Gastrocnemius medialis (tissue), 4 donors: ENCODE measurements at regions of chr4 and their contacts with region 1.

Region 1: DNA sequence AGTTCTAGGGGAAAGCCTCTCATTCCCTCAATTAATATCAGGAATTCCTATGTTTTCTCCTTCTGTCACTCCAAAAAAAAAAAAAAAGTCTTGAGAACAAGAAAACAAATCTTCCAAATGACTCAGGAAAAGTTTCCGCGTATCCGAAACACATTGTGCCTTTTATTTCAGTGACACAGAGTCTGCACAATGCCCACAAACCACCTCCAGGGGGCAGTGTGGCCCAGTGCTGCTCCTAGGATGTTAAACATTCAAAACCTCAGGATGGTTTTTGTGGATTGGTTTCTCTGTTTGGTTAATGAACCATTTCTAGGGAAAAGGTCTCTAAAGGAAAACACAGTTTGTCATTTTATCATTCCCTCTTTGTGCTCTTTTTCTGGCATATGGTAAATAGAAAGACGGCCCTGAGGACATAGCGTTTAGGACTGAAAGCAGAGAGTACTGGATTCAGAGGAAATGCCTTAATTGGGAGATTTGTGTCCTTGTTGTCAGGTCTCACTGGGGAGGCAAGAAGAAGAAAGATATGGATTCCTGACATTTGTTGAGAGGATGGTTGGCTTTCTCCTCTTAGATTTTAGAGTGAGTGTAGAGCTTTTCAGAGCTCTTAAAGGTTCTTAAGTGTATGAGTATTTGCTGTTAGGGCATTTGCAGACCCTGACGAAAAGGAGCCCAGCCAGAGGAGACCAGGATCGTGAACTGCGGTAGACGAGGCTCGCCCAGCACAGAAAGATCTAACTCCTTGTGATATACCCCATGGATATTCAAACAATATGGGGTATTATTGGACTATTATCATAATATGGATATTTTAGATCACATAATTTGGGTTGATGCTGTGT is 65.7 kb upstream of the MAP9 start:
- DNase-seq: peak; percentile 23 to 38
- ATAC-seq: peak in 1 of 2 donors; percentile 36
- H3K4me3 ChIP-seq: peak overlapping the region in 1 of 4 donors; percentile 16
- H3K27ac ChIP-seq: peak overlapping the region in 1 of 4 donors; percentile 32
- H3K4me1 ChIP-seq: no peaks in the 10 kb centered on the region
- H3K27me3 ChIP-seq: no peaks in the 10 kb centered on the region
- CTCF ChIP-seq: peak; percentile 49 to 82 (median 61)
- POLR2A ChIP-seq: no peak

Region 2: DNA sequence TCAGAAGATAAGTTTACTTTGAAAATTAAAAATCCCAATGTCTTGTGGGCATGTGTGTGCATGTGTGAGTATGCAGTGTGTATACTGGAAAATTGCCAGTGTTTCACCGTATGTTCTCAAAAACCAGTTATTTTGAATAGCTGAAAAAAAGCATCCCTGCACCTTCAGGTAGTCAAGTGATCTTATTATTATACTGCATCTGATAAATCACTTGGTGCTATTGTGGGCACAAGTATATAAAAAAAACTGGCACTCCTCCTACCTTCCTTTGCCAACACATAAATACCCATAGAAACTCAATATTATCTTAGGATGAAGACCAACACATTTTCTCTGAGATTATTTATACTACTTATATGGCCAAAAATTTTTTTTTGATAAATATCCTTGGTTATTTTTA is 25.8 kb after region 1 on chr4:
- in situ Hi-C with region 1: no loop called
- intact Hi-C with region 1: no loop called
- DNase-seq: no peak
- ATAC-seq: no peak
- H3K4me3 ChIP-seq: no peak overlapping the region
- H3K27ac ChIP-seq: no peak overlapping the region
- H3K4me1 ChIP-seq: no peaks in the 10 kb centered on the region
- H3K27me3 ChIP-seq: no peaks in the 10 kb centered on the region
- CTCF ChIP-seq: no peak
- POLR2A ChIP-seq: no peak

Region 3: DNA sequence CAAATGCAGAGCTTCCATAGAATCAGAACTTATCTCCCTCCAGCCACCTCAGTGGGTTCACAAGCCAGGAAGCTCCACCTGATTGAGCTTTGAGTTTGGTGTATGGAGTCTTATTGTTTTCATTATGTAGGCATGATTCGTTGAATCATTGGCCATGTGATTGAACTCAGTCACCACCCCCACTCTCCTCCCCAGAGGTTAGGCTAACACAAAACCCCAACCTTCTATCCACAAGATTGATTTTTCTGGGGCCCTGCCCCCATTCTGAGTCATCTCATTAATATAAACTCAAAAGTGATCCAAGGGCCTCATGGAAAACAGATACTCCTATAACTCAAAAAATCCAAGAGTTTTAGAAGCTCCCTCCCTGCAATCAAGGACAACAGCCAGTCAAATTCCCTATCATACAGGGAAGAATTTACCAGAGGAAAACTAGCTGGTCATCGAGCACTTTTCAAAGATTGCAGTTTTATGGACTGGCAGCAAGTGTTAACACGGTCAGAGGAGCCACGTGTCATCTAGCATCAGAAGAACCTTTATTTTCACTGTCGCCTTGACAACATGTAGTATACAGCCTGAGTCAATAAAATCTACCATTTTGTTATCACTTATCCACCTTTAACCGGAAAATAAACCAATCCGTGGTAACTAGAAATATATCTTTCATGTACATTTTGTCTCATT is 280.5 kb after region 1 on chr4:
- in situ Hi-C with region 1: no loop called
- intact Hi-C with region 1: no loop called
- DNase-seq: no peak
- ATAC-seq: no peak
- H3K4me3 ChIP-seq: no peak overlapping the region
- H3K27ac ChIP-seq: no peak overlapping the region
- H3K4me1 ChIP-seq: no peaks in the 10 kb centered on the region
- H3K27me3 ChIP-seq: no peaks in the 10 kb centered on the region
- CTCF ChIP-seq: no peak
- POLR2A ChIP-seq: no peak

Region 4: DNA sequence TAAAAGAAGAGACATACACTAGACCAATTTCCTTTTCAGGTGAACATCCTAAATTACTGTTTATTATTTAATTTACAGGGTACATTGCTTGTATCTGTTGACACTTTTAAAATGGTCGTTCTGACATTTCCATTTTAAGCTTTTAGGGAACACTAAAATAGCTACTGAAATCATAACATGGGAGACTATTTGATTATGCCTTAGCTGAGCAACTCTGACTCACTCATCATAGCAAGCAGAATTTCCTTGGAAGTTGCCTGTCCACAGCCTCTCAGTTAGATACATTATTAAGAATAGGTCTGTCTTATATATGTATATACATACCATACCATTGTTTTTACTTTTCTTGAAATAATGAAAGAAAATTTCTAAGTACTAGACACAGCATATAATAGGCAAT is 338.3 kb after region 1 on chr4:
- in situ Hi-C with region 1: loop called in 2 of 4 experiments (anchors 5 to 10 kb)
- intact Hi-C with region 1: no loop called
- DNase-seq: no peak
- ATAC-seq: no peak
- H3K4me3 ChIP-seq: no peak overlapping the region
- H3K27ac ChIP-seq: no peak overlapping the region
- H3K4me1 ChIP-seq: no peaks in the 10 kb centered on the region
- H3K27me3 ChIP-seq: no peaks in the 10 kb centered on the region
- CTCF ChIP-seq: no peak
- POLR2A ChIP-seq: no peak

Region 5: GRCh38 chr4:155787113-155787710 is 344.7 kb after region 1 on chr4:
- in situ Hi-C with region 1: loop called (anchors 5 to 10 kb)
- intact Hi-C with region 1: loop called (anchors 1 kb)
- DNase-seq: no peak
- ATAC-seq: peak in 1 of 2 donors; percentile 24
- H3K4me3 ChIP-seq: no peak overlapping the region
- H3K27ac ChIP-seq: no peak overlapping the region
- H3K4me1 ChIP-seq: no peaks in the 10 kb centered on the region
- H3K27me3 ChIP-seq: no peaks in the 10 kb centered on the region
- CTCF ChIP-seq: peak; percentile 28 to 48 (median 42)
- POLR2A ChIP-seq: no peak

Region 6: DNA sequence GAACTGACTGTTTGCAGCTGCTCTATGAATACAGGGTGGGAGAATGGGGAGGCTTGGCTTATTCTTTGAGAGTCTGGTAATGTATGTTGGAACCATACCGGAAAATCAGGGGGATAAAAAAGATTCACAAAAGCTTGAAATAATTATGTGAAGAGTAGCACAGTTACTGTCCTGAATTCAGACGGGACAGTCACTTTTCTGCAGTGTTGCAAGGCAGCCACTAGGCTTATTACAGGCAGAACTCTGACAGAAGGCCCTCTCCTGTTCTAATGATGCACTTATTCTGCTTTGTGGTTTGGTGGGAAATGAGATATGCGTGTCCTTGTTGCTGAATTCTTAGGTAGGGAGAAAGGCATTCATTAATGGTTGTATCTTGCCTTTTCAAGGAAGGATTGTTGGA is 353.5 kb after region 1 on chr4:
- in situ Hi-C with region 1: loop called in 2 of 4 experiments (anchors 10 kb)
- intact Hi-C with region 1: no loop called
- DNase-seq: no peak
- ATAC-seq: no peak
- H3K4me3 ChIP-seq: no peak overlapping the region
- H3K27ac ChIP-seq: no peak overlapping the region
- H3K4me1 ChIP-seq: no peaks in the 10 kb centered on the region
- H3K27me3 ChIP-seq: no peaks in the 10 kb centered on the region
- CTCF ChIP-seq: peak in 1 of 5 experiments; percentile 19
- POLR2A ChIP-seq: no peak

Region 7: GRCh38 chr4:155946486-155946885 is 504.0 kb after region 1 on chr4:
- in situ Hi-C with region 1: loop called in 1 of 4 experiments (anchors 25 kb)
- intact Hi-C with region 1: no loop called
- DNase-seq: no peak
- ATAC-seq: no peak
- H3K4me3 ChIP-seq: no peak overlapping the region
- H3K27ac ChIP-seq: no peak overlapping the region
- H3K4me1 ChIP-seq: no peaks in the 10 kb centered on the region
- H3K27me3 ChIP-seq: no peaks in the 10 kb centered on the region
- CTCF ChIP-seq: no peak
- POLR2A ChIP-seq: no peak